Activated CD4-positive, alpha-beta T cell treated with anti-CD3 and anti-CD28 coated beads for 36 hours (primary cell): ENCODE measurements at regions of chr18 and their contacts with region 1.

Region 1: GRCh38 chr18:50334546-50335152 is 40.2 kb upstream of the SKA1 start:
- DNase-seq: no peak
- ATAC-seq: no peak
- H3K4me3 Mint-ChIP-seq: no peak overlapping the region
- H3K27ac Mint-ChIP-seq: no peak overlapping the region
- H3K4me1 Mint-ChIP-seq: no peaks in the 10 kb centered on the region
- H3K27me3 Mint-ChIP-seq: peaks cover 4% of the 10 kb centered on the region

Region 2: DNA sequence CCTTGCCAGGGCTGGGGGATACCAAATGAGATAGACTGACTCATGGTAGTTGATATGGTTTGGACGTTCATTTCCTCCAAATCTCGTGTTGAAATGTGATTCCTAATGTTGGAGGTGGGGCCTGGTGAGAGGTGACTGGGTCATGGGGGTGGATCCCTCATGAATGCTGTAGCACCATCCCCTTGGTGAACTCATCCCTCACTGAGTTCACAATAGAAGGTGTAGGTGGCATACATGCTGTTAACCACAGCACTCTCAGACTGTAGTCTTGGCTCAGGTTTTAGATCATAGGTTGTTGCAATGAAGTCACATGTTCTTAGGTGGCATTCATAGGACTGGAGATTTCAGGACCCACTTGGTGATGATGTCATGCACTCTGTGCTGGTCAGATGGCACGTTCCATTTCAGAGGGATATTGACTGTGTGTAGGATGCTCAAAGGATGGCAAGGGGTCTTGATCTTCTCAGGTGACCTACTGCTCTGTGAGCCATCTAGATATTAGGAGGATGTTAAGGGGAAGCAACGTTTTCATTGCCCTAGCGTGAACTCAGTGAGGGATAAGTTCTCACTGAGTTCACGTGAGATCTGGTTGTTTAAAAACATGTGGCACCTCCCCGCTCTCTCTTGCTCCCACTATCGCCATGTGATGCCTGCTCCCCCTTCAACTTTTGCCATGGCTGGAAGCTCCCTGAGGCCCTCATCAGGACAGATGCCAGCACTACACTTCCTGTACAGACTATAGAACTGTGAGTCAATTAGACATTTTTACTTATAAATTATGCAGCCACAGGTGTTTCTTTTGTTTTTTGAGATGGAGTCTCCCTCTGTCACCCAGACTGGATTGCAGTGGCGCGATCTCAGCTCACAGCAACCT is 447.5 kb before region 1 on chr18:
- CTCF ChIA-PET with region 1: no interaction called
- POLR2A ChIA-PET with region 1: no interaction called
- intact Hi-C with region 1: loop called in 1 of 2 experiments (anchors 5 kb)
- DNase-seq: peak; percentile 13
- ATAC-seq: peak; percentile 60
- H3K4me3 Mint-ChIP-seq: no peak overlapping the region
- H3K27ac Mint-ChIP-seq: no peak overlapping the region
- H3K4me1 Mint-ChIP-seq: no peaks in the 10 kb centered on the region
- H3K27me3 Mint-ChIP-seq: peaks cover 8% of the 10 kb centered on the region

Region 3: GRCh38 chr18:50320719-50321118 is 13.9 kb before region 1 on chr18:
- CTCF ChIA-PET with region 1: no interaction called
- POLR2A ChIA-PET with region 1: no interaction called
- intact Hi-C with region 1: no loop called
- DNase-seq: no peak
- ATAC-seq: peak; percentile 42
- H3K4me3 Mint-ChIP-seq: no peak overlapping the region
- H3K27ac Mint-ChIP-seq: no peak overlapping the region
- H3K4me1 Mint-ChIP-seq: peaks cover 2% of the 10 kb centered on the region
- H3K27me3 Mint-ChIP-seq: peaks cover 3% of the 10 kb centered on the region

Region 4: GRCh38 chr18:50397023-50397422 is 62.4 kb after region 1 on chr18:
- CTCF ChIA-PET with region 1: no interaction called
- POLR2A ChIA-PET with region 1: no interaction called
- intact Hi-C with region 1: no loop called
- DNase-seq: no peak
- ATAC-seq: no peak
- H3K4me3 Mint-ChIP-seq: no peak overlapping the region
- H3K27ac Mint-ChIP-seq: no peak overlapping the region
- H3K4me1 Mint-ChIP-seq: peaks cover 2% of the 10 kb centered on the region
- H3K27me3 Mint-ChIP-seq: peaks cover 17% of the 10 kb centered on the region